MCF 10A (cell line): ENCODE measurements at regions of chr5 and their contacts with region 1.

Region 1: DNA sequence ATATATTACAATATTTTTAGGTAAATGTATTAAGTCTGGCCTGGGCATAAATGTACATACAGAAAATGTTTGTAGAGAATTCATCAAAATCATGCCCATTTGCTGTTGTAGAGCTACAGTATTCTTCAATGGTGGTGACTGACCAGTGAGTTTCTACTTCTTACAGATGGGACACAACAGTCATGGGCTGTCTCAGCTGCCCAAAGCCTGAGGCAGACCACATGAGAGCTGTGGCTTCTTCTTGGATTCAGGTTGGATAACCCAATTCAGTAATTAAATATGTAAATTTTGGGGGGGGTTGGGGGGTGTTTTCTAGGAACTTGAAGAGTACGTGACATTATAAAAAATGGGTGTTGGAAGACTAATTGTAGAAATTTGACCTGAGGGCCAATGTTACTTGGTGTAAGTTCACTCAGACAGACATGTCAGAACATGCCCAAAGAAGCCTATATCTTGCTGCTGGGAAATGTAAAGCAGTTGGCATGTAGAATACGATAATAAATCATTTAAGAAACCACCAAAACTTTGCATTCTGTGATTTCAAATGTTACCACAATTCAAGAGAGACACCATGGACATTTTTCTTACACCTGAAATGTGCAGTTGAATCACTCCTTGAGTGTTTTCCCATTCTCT is 17.9 kb downstream of the STARD4 start:
- DNase-seq: peak; percentile 83
- H3K4me3 Mint-ChIP-seq: no peak overlapping the region
- H3K27ac Mint-ChIP-seq: peak overlapping the region; percentile 99
- H3K4me1 Mint-ChIP-seq: peaks cover 11% of the 10 kb centered on the region
- H3K27me3 Mint-ChIP-seq: no peaks in the 10 kb centered on the region
- CTCF ChIP-seq: no peak

Region 2: GRCh38 chr5:111505096-111505495 is 10.6 kb after region 1 on chr5:
- CTCF ChIA-PET with region 1: interaction called, 4 read pairs
- POLR2A ChIA-PET with region 1: interaction called, 105 read pairs
- intact Hi-C with region 1: no loop called
- DNase-seq: no peak
- H3K4me3 Mint-ChIP-seq: no peak overlapping the region
- H3K27ac Mint-ChIP-seq: no peak overlapping the region
- H3K4me1 Mint-ChIP-seq: peaks cover 23% of the 10 kb centered on the region
- H3K27me3 Mint-ChIP-seq: no peaks in the 10 kb centered on the region
- CTCF ChIP-seq: no peak

Region 3: GRCh38 chr5:111512375-111513130 is 18.1 kb after region 1 on chr5 and contains the start of gene STARD4:
- CTCF ChIA-PET with region 1: interaction called, 5 read pairs
- POLR2A ChIA-PET with region 1: interaction called, 105 read pairs
- intact Hi-C with region 1: no loop called
- DNase-seq: peak; percentile 94
- H3K4me3 Mint-ChIP-seq: peak within 1 kb of the TSS; percentile 76
- H3K27ac Mint-ChIP-seq: peak within 1 kb of the TSS; percentile 65
- H3K4me1 Mint-ChIP-seq: peaks cover 38% of the 10 kb centered on the region
- H3K27me3 Mint-ChIP-seq: no peaks in the 10 kb centered on the region
- CTCF ChIP-seq: no peak
- total RNA-seq, gene STARD4: 31.1 and 33.1 TPM in 2 replicates